ENCODE measurements at regions of chr13 and their contacts with region 1.

Region 1: DNA sequence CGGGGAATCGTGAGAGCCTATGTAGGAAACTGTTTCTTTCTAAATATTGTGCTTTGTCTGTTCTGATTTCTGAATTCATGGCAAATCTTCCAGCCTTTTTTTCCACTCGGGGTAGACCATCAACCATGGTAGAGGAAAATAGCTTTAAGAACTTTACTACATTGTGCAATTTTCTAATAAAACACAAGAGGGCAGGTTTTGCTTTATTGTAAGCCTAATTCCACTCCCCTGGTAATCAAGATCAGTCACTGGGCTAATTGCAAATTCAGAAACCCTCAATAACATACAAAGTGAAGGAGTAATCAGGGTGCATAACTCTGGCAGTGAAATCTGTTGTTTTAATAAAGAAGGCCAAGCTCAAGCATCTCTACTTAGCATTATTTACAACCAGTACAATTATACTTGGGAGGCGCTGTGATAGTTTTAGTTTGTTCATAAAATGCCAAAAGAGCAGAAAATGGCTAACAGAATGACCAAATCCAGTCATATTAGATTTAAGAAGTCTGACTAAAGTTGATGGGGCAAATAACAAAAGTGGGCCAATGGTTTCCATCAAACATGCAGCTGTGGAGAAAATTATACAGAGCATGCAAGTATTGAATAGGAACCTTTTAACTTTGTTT is 43.8 kb downstream of the DCT start:
- DNase-seq: no peak
- ATAC-seq: peak; percentile 78
- H3K4me3 ChIP-seq: no peak overlapping the region
- H3K27ac ChIP-seq: no peak overlapping the region
- H3K4me1 ChIP-seq: no peaks in the 10 kb centered on the region
- H3K27me3 ChIP-seq: peaks cover 2% of the 10 kb centered on the region; the same call in 1 of the 2 replicates
- CTCF ChIP-seq: peak; percentile 60; the same call in 1 of the 2 replicates

Region 2: DNA sequence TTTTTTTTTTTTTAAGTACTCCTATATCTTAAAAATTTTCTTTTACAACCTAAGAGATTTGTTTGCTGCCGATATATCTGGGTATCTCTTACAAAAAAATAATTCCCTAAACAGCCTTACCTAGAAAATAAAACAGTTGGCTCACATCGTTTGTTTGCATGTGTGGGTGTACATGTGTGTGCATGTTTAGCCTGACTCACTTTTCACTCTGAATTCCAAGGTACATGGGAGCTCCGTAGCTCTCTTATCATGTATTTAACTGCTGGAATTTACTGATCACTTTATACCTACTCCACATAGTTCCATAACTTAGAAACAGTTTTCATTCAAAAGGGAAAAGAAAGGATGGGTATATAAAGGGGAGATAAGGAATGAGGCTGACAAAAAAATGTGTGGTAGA is 592.6 kb before region 1 on chr13:
- CTCF ChIA-PET with region 1: no interaction called
- POLR2A ChIA-PET with region 1: no interaction called
- in situ Hi-C with region 1: no loop called
- intact Hi-C with region 1: no loop called
- DNase-seq: no peak
- ATAC-seq: no peak
- H3K4me3 ChIP-seq: no peak overlapping the region
- H3K27ac ChIP-seq: no peak overlapping the region
- H3K4me1 ChIP-seq: no peaks in the 10 kb centered on the region
- H3K27me3 ChIP-seq: no peaks in the 10 kb centered on the region
- CTCF ChIP-seq: no peak

Region 3: GRCh38 chr13:94549232-94550061 is 113.7 kb after region 1 on chr13:
- CTCF ChIA-PET with region 1: interaction called, 4 read pairs
- POLR2A ChIA-PET with region 1: no interaction called
- in situ Hi-C with region 1: no loop called
- intact Hi-C with region 1: loop called (anchors 10 kb)
- DNase-seq: peak; percentile 92
- ATAC-seq: peak; percentile 96
- H3K4me3 ChIP-seq: peak overlapping the region; percentile 62 to 75
- H3K27ac ChIP-seq: peak overlapping the region; percentile 85
- H3K4me1 ChIP-seq: peaks cover 4% of the 10 kb centered on the region
- H3K27me3 ChIP-seq: no peaks in the 10 kb centered on the region
- CTCF ChIP-seq: peak; percentile 12; the same call in 1 of the 2 replicates

Region 4: DNA sequence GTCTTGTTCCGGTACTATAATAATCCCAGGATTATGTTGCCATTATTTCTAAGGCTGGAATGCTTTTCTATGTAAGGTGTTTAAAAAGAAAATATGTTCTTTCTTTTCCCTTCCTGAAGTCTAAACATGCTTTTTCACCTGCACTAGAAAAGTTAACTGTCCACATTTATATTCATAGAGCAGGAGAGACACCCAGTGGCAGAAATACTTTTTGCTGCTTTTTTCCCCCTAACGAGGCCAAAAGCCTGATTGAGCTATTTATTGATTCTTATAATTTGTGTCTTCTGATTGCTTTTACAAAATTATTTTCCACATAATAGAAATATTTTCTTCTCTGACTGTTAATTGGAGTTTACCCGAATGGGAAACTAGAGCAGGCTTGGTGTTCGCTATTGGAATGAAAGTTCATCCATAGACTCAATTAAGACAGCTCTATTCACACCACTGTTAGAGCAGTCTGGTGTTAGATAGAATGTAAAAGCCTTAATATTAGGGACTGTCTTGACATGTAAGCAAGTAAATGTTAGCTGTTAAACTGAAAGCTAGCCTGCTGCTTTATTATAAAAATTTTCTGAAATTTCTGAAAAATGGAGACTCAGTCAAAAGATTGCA is 181.8 kb after region 1 on chr13:
- CTCF ChIA-PET with region 1: interaction called, 7 read pairs
- POLR2A ChIA-PET with region 1: no interaction called
- in situ Hi-C with region 1: no loop called
- intact Hi-C with region 1: loop called (anchors 5 kb)
- DNase-seq: no peak
- ATAC-seq: no peak
- H3K4me3 ChIP-seq: no peak overlapping the region
- H3K27ac ChIP-seq: no peak overlapping the region
- H3K4me1 ChIP-seq: no peaks in the 10 kb centered on the region
- H3K27me3 ChIP-seq: no peaks in the 10 kb centered on the region
- CTCF ChIP-seq: peak; percentile 48; the same call in 1 of the 2 replicates